Calu3 (cell line): ENCODE measurements at regions of chr6 and their contacts with region 1.

Region 1: GRCh38 chr6:146913842-146914488 is 290.3 kb upstream of the STXBP5 start:
- DNase-seq: peak; percentile 63
- H3K4me3 Mint-ChIP-seq: peak overlapping the region; percentile 54
- H3K27ac Mint-ChIP-seq: peak overlapping the region; percentile 87
- H3K4me1 Mint-ChIP-seq: peaks cover 24% of the 10 kb centered on the region
- H3K27me3 Mint-ChIP-seq: no peaks in the 10 kb centered on the region
- CTCF ChIP-seq: no peak

Region 2: DNA sequence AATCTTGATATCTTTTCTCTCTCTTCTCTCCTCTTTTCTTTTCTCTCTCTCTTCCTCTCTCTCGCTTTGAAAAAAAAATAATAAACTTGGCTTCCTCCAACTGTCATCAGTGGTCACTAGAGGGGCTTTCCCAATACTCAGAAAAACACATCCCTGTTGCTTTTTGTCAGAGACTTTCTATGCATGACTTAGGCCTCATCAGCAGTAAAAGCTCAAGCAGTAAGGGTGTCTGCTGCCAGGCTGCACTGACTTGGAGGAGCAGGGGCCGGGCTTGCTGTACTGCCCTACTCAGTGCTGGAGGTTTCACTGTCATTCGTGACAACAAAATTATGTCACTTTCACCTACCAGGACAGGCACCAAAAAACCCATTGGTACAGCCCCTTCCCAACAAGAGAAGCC is 43.2 kb before region 1 on chr6:
- CTCF ChIA-PET with region 1: no interaction called
- intact Hi-C with region 1: loop called (anchors 5 kb)
- DNase-seq: no peak
- H3K4me3 Mint-ChIP-seq: no peak overlapping the region
- H3K27ac Mint-ChIP-seq: peak overlapping the region; percentile 14
- H3K4me1 Mint-ChIP-seq: peaks cover 21% of the 10 kb centered on the region
- H3K27me3 Mint-ChIP-seq: no peaks in the 10 kb centered on the region
- CTCF ChIP-seq: no peak

Region 3: GRCh38 chr6:147063469-147064031 is 149.6 kb after region 1 on chr6:
- CTCF ChIA-PET with region 1: no interaction called
- intact Hi-C with region 1: loop called (anchors 10 kb)
- DNase-seq: peak; percentile 1
- H3K4me3 Mint-ChIP-seq: no peak overlapping the region
- H3K27ac Mint-ChIP-seq: no peak overlapping the region
- H3K4me1 Mint-ChIP-seq: peaks cover 38% of the 10 kb centered on the region
- H3K27me3 Mint-ChIP-seq: no peaks in the 10 kb centered on the region
- CTCF ChIP-seq: no peak

Region 4: GRCh38 chr6:147202516-147203312 is 288.7 kb after region 1 on chr6:
- CTCF ChIA-PET with region 1: no interaction called
- intact Hi-C with region 1: loop called (anchors 10 kb)
- DNase-seq: peak; percentile 69
- H3K4me3 Mint-ChIP-seq: peak overlapping the region; percentile 97
- H3K27ac Mint-ChIP-seq: peak overlapping the region; percentile 87
- H3K4me1 Mint-ChIP-seq: peaks cover 8% of the 10 kb centered on the region
- H3K27me3 Mint-ChIP-seq: no peaks in the 10 kb centered on the region
- CTCF ChIP-seq: no peak